ENCODE measurements at regions of chr11 and their contacts with region 1.

Region 1: GRCh38 chr11:111777094-111778046 is 11.2 kb upstream of the PPP2R1B start:
- DNase-seq: peak; percentile 77
- H3K4me3 Mint-ChIP-seq: no peak overlapping the region
- H3K27ac Mint-ChIP-seq: no peak overlapping the region
- H3K4me1 Mint-ChIP-seq: no peaks in the 10 kb centered on the region
- H3K27me3 Mint-ChIP-seq: no peaks in the 10 kb centered on the region

Region 2: DNA sequence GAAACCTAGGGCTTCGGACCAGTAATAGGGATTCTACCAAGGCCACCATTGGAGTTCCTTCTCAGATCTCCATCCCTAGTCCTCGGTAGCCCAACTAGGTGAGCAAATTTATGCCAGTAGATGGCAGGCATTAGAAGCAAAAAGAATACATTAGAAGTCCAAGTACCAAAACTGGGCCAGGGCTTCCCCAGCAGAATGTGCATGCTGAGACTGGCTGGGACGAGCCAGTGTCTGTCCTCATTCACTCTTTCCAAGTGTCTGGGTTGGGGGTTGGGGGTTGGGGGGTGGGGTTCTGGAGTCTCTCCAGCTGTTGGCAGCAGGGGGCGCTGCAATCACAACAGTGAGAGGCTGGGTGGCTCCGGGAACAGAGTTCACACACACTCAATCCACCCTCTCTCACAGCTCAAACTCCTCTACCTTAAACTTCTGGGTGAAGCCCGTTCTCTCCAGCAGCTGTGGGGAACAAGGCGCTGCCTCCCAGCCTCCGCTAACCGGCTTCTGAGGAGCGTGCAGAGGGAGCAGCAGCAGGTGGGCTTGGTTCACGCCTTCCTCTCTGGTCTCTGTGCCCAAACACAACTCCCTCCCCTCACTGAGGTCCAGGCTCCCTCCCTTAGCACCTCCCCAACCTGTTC is 322.7 kb before region 1 on chr11:
- intact Hi-C with region 1: loop called (anchors 1 kb)
- DNase-seq: peak; percentile 83
- H3K4me3 Mint-ChIP-seq: no peak overlapping the region
- H3K27ac Mint-ChIP-seq: peak overlapping the region; percentile 21
- H3K4me1 Mint-ChIP-seq: no peaks in the 10 kb centered on the region
- H3K27me3 Mint-ChIP-seq: peaks cover 15% of the 10 kb centered on the region

Region 3: DNA sequence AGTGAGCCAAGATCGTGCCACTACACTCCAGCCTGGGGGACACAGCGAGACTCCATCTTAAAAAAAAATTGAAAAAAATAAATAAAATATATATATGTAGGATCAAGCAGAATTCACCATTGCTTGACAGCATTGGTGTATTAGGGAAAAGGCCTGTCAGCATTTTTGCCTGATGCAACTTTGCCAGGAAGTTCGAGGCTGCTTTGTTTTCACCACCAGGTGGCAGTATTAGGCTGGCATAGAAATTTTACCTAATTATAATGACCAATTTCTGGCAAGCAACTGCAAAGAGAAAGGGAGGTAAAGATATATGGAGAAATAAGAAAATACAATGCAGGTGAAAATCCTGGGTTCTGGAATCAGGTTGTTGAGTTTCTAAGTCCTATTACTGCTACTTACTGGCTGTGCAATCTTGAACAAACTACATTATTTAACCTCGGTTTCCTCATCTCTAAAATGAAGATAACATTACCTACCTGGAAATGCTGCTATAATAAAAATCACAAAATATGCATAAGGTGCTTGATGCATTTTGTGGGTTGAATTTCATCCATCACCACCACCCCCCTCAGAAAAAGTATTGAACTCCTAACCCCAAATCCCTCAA is 212.2 kb before region 1 on chr11:
- intact Hi-C with region 1: loop called (anchors 1 kb)
- DNase-seq: peak; percentile 89
- H3K4me3 Mint-ChIP-seq: no peak overlapping the region
- H3K27ac Mint-ChIP-seq: no peak overlapping the region
- H3K4me1 Mint-ChIP-seq: no peaks in the 10 kb centered on the region
- H3K27me3 Mint-ChIP-seq: no peaks in the 10 kb centered on the region

Region 4: GRCh38 chr11:111586388-111586831 is 191.0 kb before region 1 on chr11:
- intact Hi-C with region 1: loop called (anchors 1 kb)
- DNase-seq: peak; percentile 84
- H3K4me3 Mint-ChIP-seq: no peak overlapping the region
- H3K27ac Mint-ChIP-seq: no peak overlapping the region
- H3K4me1 Mint-ChIP-seq: peaks cover 2% of the 10 kb centered on the region
- H3K27me3 Mint-ChIP-seq: peaks cover 4% of the 10 kb centered on the region

Region 5: DNA sequence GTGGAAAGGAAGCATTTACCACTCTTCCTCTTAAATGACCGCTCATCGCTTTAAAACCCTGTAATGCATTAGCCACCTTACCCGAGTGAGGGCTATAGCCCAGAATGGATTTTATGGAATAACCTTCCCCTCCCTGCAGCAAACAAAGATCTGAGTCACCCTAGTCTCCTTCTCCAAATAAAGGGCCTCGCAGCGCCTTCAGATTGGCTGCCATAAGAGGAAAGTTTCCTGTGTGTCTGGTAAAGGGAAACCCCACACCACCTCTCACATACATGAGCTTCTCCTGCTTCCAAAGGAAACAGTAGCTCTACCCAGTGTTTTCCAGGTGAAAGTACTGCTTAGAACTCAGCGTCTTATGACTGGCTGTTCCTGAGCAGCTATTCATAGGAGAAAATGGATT is 58.9 kb before region 1 on chr11:
- intact Hi-C with region 1: no loop called
- DNase-seq: no peak
- H3K4me3 Mint-ChIP-seq: no peak overlapping the region
- H3K27ac Mint-ChIP-seq: no peak overlapping the region
- H3K4me1 Mint-ChIP-seq: no peaks in the 10 kb centered on the region
- H3K27me3 Mint-ChIP-seq: no peaks in the 10 kb centered on the region

Region 6: GRCh38 chr11:111766093-111766833 is 11.1 kb before region 1 on chr11 and contains the start of gene PPP2R1B:
- intact Hi-C with region 1: loop called (anchors 1 kb)
- DNase-seq: peak; percentile 91
- H3K4me3 Mint-ChIP-seq: peak within 1 kb of the TSS; percentile 85
- H3K27ac Mint-ChIP-seq: peak within 1 kb of the TSS; percentile 98
- H3K4me1 Mint-ChIP-seq: peaks cover 31% of the 10 kb centered on the region
- H3K27me3 Mint-ChIP-seq: no peaks in the 10 kb centered on the region
- total RNA-seq, gene PPP2R1B: 63.2 and 63.6 TPM in 2 replicates

Region 7: DNA sequence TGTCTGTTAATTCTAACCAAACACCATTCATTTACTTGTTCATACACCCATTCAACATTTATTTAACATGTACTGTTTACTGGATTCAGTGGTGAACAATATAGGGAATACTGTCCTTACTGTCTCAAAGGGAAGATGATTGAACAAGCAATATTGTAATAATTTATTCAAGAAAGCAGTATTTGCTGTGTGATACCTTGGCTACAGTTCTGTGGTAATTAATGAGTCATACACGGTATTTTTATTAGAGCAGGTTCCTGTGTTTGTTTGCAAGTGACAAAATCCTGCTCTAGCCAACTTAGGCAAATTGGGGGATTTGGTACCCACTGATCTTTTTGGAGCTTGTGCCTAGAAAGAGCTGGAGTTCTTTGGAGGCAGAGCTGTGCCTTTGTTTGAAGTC is 280.7 kb after region 1 on chr11:
- intact Hi-C with region 1: no loop called
- DNase-seq: no peak
- H3K4me3 Mint-ChIP-seq: no peak overlapping the region
- H3K27ac Mint-ChIP-seq: no peak overlapping the region
- H3K4me1 Mint-ChIP-seq: peaks cover 8% of the 10 kb centered on the region
- H3K27me3 Mint-ChIP-seq: no peaks in the 10 kb centered on the region

Measured in activated CD4-positive, alpha-beta T cell treated with anti-CD3 and anti-CD28 coated beads, Interleukin-2, amount 10 ng/mL, durations not matched to agents 24 days and 14 days (primary cell).